ENCODE measurements at regions of chr2 and their contacts with region 1.

Region 1: GRCh38 chr2:207746131-207746530 is 23.6 kb downstream of the FZD5 start:
- DNase-seq: peak; percentile 79
- H3K4me3 ChIP-seq: no peak overlapping the region
- H3K27ac ChIP-seq: no peak overlapping the region
- H3K4me1 ChIP-seq: no peaks in the 10 kb centered on the region
- H3K27me3 ChIP-seq: no peaks in the 10 kb centered on the region
- CTCF ChIP-seq: peak; percentile 52 to 84 (median 78)
- POLR2A ChIP-seq: no peak

Region 2: GRCh38 chr2:207807516-207807915 is 61.4 kb after region 1 on chr2:
- intact Hi-C with region 1: no loop called
- DNase-seq: no peak
- H3K4me3 ChIP-seq: no peak overlapping the region
- H3K27ac ChIP-seq: no peak overlapping the region
- H3K4me1 ChIP-seq: peaks cover 0 to 16% (median 9%) of the 10 kb centered on the region in 6 donors
- H3K27me3 ChIP-seq: no peaks in the 10 kb centered on the region
- CTCF ChIP-seq: no peak
- POLR2A ChIP-seq: no peak

Region 3: GRCh38 chr2:208040199-208041171 is 294.4 kb after region 1 on chr2:
- intact Hi-C with region 1: loop called (anchors 10 kb)
- DNase-seq: peak; percentile 86
- H3K4me3 ChIP-seq: no peak overlapping the region
- H3K27ac ChIP-seq: no peak overlapping the region
- H3K4me1 ChIP-seq: peaks cover 0 to 3% (median 0%) of the 10 kb centered on the region in 6 donors
- H3K27me3 ChIP-seq: no peaks in the 10 kb centered on the region
- CTCF ChIP-seq: peak; percentile 54 to 88 (median 80)
- POLR2A ChIP-seq: no peak